Upper lobe of right lung (tissue), 1 donor: ENCODE measurements at regions of chr13 and their contacts with region 1.

Region 1: GRCh38 chr13:30114571-30115256 is 192.6 kb downstream of the KATNAL1 start:
- DNase-seq: peak; percentile 95
- ATAC-seq: peak; percentile 94
- H3K4me3 ChIP-seq: peak overlapping the region; percentile 52
- H3K27ac ChIP-seq: peak overlapping the region; percentile 55
- H3K4me1 ChIP-seq: peaks cover 27% of the 10 kb centered on the region
- H3K27me3 ChIP-seq: peaks cover 5% of the 10 kb centered on the region
- CTCF ChIP-seq: peak; percentile 89

Region 2: DNA sequence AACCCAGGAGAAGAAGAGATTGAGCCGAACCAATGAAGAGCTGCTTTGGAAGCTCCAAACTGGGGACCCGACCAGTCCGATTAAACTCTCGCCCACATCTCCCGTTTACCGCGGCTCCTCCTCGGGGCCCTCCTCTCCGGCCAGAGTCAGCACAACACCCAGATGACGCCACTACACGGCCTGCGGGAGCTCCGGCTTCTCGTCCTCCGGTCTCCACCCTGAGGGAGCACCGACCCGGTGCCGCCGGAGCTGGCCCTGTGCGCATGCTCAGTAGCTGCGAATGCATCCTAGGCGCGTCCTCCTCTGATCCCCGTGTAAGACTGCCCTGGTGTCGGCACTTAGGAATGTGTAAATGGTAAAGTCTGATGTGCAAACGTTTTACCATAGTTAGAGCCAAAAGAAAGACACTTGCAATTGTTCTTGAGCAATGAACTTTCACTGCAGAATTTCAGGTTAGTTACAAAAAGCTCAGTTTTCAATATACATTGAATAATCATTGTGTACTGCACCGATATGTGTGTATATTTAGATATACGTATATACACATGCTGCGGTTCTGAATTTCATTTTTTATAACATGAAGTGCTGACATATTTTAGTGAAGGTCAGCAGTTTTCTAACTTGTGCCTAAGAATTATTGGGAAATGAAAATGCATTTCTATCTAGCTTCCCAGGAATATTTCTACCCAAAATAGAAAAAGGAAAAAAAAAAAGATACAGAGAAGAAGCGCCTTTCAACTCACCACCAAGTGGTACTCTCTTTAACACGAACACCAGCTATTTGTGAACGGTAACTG is 611.5 kb before region 1 on chr13:
- intact Hi-C with region 1: loop called (anchors 5 kb)
- DNase-seq: no peak
- ATAC-seq: no peak
- H3K4me3 ChIP-seq: no peak overlapping the region
- H3K27ac ChIP-seq: no peak overlapping the region
- H3K4me1 ChIP-seq: no peaks in the 10 kb centered on the region
- H3K27me3 ChIP-seq: peaks cover 12% of the 10 kb centered on the region
- CTCF ChIP-seq: no peak

Region 3: DNA sequence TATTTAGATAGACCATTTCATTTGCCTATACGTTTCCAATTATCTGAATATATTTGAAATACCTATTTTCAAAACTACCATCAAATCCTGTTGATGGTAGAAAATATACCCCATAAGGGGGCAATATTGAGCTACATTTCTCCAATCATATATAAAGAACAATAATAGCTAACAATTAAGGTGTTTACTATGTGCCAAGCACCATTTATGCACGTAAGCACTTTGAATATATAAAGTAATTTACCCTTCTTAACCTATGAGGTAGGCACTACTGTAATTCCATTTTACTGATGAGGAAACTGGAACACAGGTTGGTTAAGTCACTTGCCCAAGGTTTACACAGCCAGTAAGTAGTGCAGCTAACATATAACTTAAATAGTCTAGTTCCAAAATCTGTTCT is 343.5 kb before region 1 on chr13:
- intact Hi-C with region 1: loop called (anchors 5 kb)
- DNase-seq: no peak
- ATAC-seq: peak; percentile 37
- H3K4me3 ChIP-seq: no peak overlapping the region
- H3K27ac ChIP-seq: no peak overlapping the region
- H3K4me1 ChIP-seq: no peaks in the 10 kb centered on the region
- H3K27me3 ChIP-seq: no peaks in the 10 kb centered on the region
- CTCF ChIP-seq: peak; percentile 57

Region 4: GRCh38 chr13:29923554-29924481 is 190.9 kb before region 1 on chr13:
- intact Hi-C with region 1: loop called (anchors 10 kb)
- DNase-seq: peak; percentile 91
- ATAC-seq: peak; percentile 89
- H3K4me3 ChIP-seq: no peak overlapping the region
- H3K27ac ChIP-seq: peak overlapping the region; percentile 86
- H3K4me1 ChIP-seq: peaks cover 29% of the 10 kb centered on the region
- H3K27me3 ChIP-seq: no peaks in the 10 kb centered on the region
- CTCF ChIP-seq: peak; percentile 77